ENCODE measurements at regions of chr17 and their contacts with region 1.

Region 1: GRCh38 chr17:17420561-17421269 is 56.1 kb upstream of the MED9 start:
- DNase-seq: peak; percentile 83 to 91
- ATAC-seq: peak; percentile 64 to 66
- H3K4me3 ChIP-seq: no peak overlapping the region
- H3K27ac ChIP-seq: peak overlapping the region; percentile 67 to 82 (median 78)
- H3K4me1 ChIP-seq: peaks cover 17 to 20% of the 10 kb centered on the region in 2 donors
- H3K27me3 ChIP-seq: no peaks in the 10 kb centered on the region
- CTCF ChIP-seq: no peak
- POLR2A ChIP-seq: no peak

Region 2: GRCh38 chr17:17363638-17364337 is 56.9 kb before region 1 on chr17:
- in situ Hi-C with region 1: no loop called
- intact Hi-C with region 1: loop called (anchors 10 kb)
- DNase-seq: peak in 1 of 2 donors; percentile 12
- ATAC-seq: no peak
- H3K4me3 ChIP-seq: no peak overlapping the region
- H3K27ac ChIP-seq: peak overlapping the region in 3 of 4 donors; percentile 27 to 75 (median 50)
- H3K4me1 ChIP-seq: peaks cover 0 to 4% of the 10 kb centered on the region in 2 donors
- H3K27me3 ChIP-seq: peaks cover 0 to 6% (median 2%) of the 10 kb centered on the region in 3 donors
- CTCF ChIP-seq: no peak
- POLR2A ChIP-seq: no peak